ENCODE measurements at regions of chr17 and their contacts with region 1.

Region 1: GRCh38 chr17:31008374-31009041 is 37.7 kb downstream of the RNF135 start:
- DNase-seq: peak; percentile 16 to 60 (median 40)
- ATAC-seq: peak; percentile 77
- H3K4me3 ChIP-seq: peak overlapping the region; percentile 75
- H3K4me3 Mint-ChIP-seq: peak overlapping the region; percentile 86 to 97 (median 92)
- H3K27ac ChIP-seq: peak overlapping the region; percentile 61
- H3K27ac Mint-ChIP-seq: peak overlapping the region; percentile 21 to 94 (median 88)
- H3K4me1 ChIP-seq: peaks cover 0 to 9% of the 10 kb centered on the region in 2 donors
- H3K4me1 Mint-ChIP-seq: peaks cover 8 to 23% (median 18%) of the 10 kb centered on the region in 7 donors
- H3K27me3 ChIP-seq: no peaks in the 10 kb centered on the region
- H3K27me3 Mint-ChIP-seq: peaks cover 0 to 31% (median 0%) of the 10 kb centered on the region in 5 donors

Region 2: GRCh38 chr17:29401258-29401657 is 1607.2 kb before region 1 on chr17:
- CTCF ChIA-PET with region 1: no interaction called
- POLR2A ChIA-PET with region 1: no interaction called
- intact Hi-C with region 1: no loop called
- DNase-seq: no peak
- ATAC-seq: peak; percentile 26
- H3K4me3 ChIP-seq: no peak overlapping the region
- H3K4me3 Mint-ChIP-seq: no peak overlapping the region
- H3K27ac ChIP-seq: no peak overlapping the region
- H3K27ac Mint-ChIP-seq: no peak overlapping the region
- H3K4me1 ChIP-seq: no peaks in the 10 kb centered on the region
- H3K4me1 Mint-ChIP-seq: peaks cover 6 to 41% (median 33%) of the 10 kb centered on the region in 7 donors
- H3K27me3 ChIP-seq: no peaks in the 10 kb centered on the region
- H3K27me3 Mint-ChIP-seq: no peaks in the 10 kb centered on the region

Region 3: GRCh38 chr17:30970831-30971567 is 37.5 kb before region 1 on chr17 and contains the start of gene RNF135:
- CTCF ChIA-PET with region 1: interaction called, 3 read pairs
- POLR2A ChIA-PET with region 1: interaction called, 3 read pairs
- intact Hi-C with region 1: loop called in 1 of 2 experiments (anchors 2 kb)
- DNase-seq: peak; percentile 13 to 72 (median 47)
- ATAC-seq: peak; percentile 76
- H3K4me3 ChIP-seq: peak within 1 kb of the TSS; percentile 76
- H3K4me3 Mint-ChIP-seq: peak within 1 kb of the TSS; percentile 88 to 99 (median 96)
- H3K27ac ChIP-seq: peak within 1 kb of the TSS; percentile 59
- H3K27ac Mint-ChIP-seq: peak within 1 kb of the TSS; percentile 71 to 98 (median 76)
- H3K4me1 ChIP-seq: peaks cover 3% of the 10 kb centered on the region in 2 donors
- H3K4me1 Mint-ChIP-seq: peaks cover 15 to 42% (median 25%) of the 10 kb centered on the region in 7 donors
- H3K27me3 ChIP-seq: no peaks in the 10 kb centered on the region
- H3K27me3 Mint-ChIP-seq: peaks cover 0 to 6% (median 0%) of the 10 kb centered on the region in 5 donors
- total RNA-seq, gene RNF135: 3.4 to 18.7 (median 3.6) TPM

Measured in naive thymus-derived CD4-positive, alpha-beta T cell (primary cell).